ENCODE measurements at regions of chr20 and their contacts with region 1.

Region 1: GRCh38 chr20:324177-325044 is 941 bp upstream of the SOX12 start:
- DNase-seq: peak; percentile 93
- H3K4me3 ChIP-seq: peak overlapping the region; percentile 40 to 73 (median 69)
- H3K27ac ChIP-seq: peak overlapping the region; percentile 67
- H3K4me1 ChIP-seq: peaks cover 25% of the 10 kb centered on the region
- H3K27me3 ChIP-seq: no peaks in the 10 kb centered on the region
- CTCF ChIP-seq: peak; percentile 14 to 52
- POLR2A ChIP-seq: peak; percentile 35

Region 2: GRCh38 chr20:266596-267562 is 57.5 kb before region 1 on chr20:
- CTCF ChIA-PET with region 1: interaction called, 66 read pairs
- POLR2A ChIA-PET with region 1: no interaction called
- dilution Hi-C with region 1: no loop called
- intact Hi-C with region 1: loop called (anchors 1 kb)
- DNase-seq: peak; percentile 76
- H3K4me3 ChIP-seq: peak overlapping the region in 2 of 3 experiments; percentile 31 to 50
- H3K27ac ChIP-seq: no peak overlapping the region
- H3K4me1 ChIP-seq: peaks cover 3% of the 10 kb centered on the region
- H3K27me3 ChIP-seq: peaks cover 0 to 2% of the 10 kb centered on the region in 2 experiments
- CTCF ChIP-seq: peak; percentile 97 to 98
- POLR2A ChIP-seq: peak; percentile 53

Region 3: GRCh38 chr20:290084-290831 is 34.2 kb before region 1 on chr20 and contains the start of gene C20orf96:
- CTCF ChIA-PET with region 1: interaction called, 7 read pairs
- POLR2A ChIA-PET with region 1: interaction called, 3 read pairs
- dilution Hi-C with region 1: no loop called
- intact Hi-C with region 1: loop called (anchors 1 kb)
- DNase-seq: peak; percentile 94
- H3K4me3 ChIP-seq: peak within 1 kb of the TSS; percentile 82 to 98 (median 87)
- H3K27ac ChIP-seq: peak within 1 kb of the TSS; percentile 54
- H3K4me1 ChIP-seq: peaks cover 27% of the 10 kb centered on the region
- H3K27me3 ChIP-seq: no peaks in the 10 kb centered on the region
- CTCF ChIP-seq: peak; percentile 22 to 62
- POLR2A ChIP-seq: peak; percentile 70
- total RNA-seq, gene C20orf96: 17.0 and 20.0 TPM in 2 replicates

Region 4: GRCh38 chr20:297098-297924 is 27.1 kb before region 1 on chr20 and contains the start of gene ZCCHC3:
- CTCF ChIA-PET with region 1: interaction called, 42 read pairs
- POLR2A ChIA-PET with region 1: interaction called, 8 read pairs
- dilution Hi-C with region 1: no loop called
- intact Hi-C with region 1: loop called (anchors 1 kb)
- DNase-seq: peak; percentile 88
- H3K4me3 ChIP-seq: peak within 1 kb of the TSS; percentile 53 to 78 (median 63)
- H3K27ac ChIP-seq: peak within 1 kb of the TSS; percentile 83
- H3K4me1 ChIP-seq: peaks cover 33% of the 10 kb centered on the region
- H3K27me3 ChIP-seq: no peaks in the 10 kb centered on the region
- CTCF ChIP-seq: peak in 1 of 2 donors; percentile 17
- POLR2A ChIP-seq: peak; percentile 79
- total RNA-seq, gene ZCCHC3: 22.0 and 24.1 TPM in 2 replicates

Region 5: DNA sequence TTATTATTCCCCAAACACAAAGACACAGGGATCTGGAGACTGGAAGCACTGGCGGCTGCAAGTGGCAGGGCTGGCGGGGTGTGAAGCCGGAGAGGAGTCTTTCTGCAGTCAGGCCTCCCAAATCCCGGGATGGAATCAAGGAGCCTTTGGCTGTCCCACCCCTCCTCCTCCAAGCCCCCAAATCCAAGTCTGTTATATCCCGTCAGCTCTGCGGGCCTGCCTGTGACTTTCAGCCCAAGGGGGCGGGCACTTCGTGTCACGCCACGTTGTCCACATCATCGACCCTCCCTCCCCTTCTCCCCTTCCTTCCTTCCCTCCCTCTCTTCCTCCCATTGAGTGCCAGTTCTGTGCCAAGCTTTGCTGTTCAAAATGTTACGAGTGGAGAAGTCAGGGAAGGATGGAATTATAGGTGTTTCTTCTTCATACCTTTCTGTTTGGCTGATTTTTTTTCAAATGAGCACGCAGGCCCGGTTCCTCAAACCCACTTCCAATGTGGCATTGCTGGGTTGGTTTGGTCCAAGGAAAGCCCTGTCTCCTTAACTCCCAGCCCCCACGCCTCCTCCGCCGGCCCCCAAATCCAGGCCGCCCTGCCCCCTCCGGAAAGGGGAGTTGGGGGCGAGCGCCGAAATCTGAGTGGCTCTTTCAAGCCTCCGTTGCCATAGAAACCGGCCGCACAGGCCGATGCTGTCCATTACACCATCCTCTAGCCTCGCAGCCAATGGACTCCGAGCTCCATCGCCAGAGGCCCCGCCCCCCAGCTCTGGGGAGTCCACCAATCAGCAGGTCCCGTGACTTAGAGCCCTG is 14.4 kb before region 1 on chr20:
- CTCF ChIA-PET with region 1: interaction called, 18 read pairs
- POLR2A ChIA-PET with region 1: interaction called, 9 read pairs
- dilution Hi-C with region 1: no loop called
- intact Hi-C with region 1: loop called (anchors 1 kb)
- DNase-seq: peak; percentile 99
- H3K4me3 ChIP-seq: peak overlapping the region; percentile 34 to 54 (median 41)
- H3K27ac ChIP-seq: peak overlapping the region; percentile 96
- H3K4me1 ChIP-seq: peaks cover 31% of the 10 kb centered on the region
- H3K27me3 ChIP-seq: no peaks in the 10 kb centered on the region
- CTCF ChIP-seq: no peak
- POLR2A ChIP-seq: peak; percentile 86

Region 6: DNA sequence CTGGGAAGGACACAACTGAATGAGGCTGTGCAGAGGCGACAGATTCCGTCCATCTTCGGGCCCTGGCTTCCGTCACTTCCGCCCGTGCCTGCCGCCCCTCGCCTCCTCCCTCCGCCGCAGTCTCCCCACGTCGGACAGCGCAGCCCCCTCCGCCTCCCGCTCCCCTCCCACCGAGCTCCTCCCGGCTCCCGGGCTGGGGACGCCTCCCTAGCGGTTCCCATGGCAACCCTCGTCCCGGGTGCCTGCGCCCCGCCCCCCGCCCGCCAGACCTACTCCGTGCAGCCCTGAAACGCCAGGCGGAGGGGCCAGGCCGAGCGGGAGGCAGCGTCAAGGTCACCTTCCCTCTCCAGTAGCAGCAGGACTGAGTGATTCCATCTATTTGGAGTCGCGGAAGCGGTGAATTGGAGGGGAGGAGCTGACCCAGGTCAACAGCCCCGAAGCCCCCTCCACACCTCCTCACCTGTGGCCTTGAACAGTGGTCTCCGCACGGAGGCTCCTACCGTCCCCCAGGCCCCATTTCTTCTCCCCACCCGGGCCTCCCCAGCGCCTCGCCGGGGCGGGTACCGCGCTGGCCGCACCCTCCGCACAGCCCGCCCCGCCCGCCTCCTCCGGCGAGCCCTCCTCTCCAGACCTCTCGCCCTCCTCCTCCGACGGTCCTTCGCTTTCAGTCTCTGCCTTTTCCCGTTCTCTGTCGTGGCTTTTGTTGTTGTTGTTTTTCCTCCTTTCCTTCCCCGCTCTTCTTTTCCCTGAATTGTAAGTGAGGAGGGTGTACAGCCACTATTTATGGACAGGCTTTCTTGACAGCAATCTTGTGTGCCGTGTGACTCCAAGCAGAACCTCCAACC is 23.5 kb after region 1 on chr20:
- CTCF ChIA-PET with region 1: interaction called, 42 read pairs
- POLR2A ChIA-PET with region 1: interaction called, 4 read pairs
- dilution Hi-C with region 1: no loop called
- intact Hi-C with region 1: loop called (anchors 1 kb)
- DNase-seq: peak; percentile 89
- H3K4me3 ChIP-seq: peak overlapping the region; percentile 53 to 77 (median 54)
- H3K27ac ChIP-seq: peak overlapping the region; percentile 51
- H3K4me1 ChIP-seq: peaks cover 9% of the 10 kb centered on the region
- H3K27me3 ChIP-seq: no peaks in the 10 kb centered on the region
- CTCF ChIP-seq: no peak
- POLR2A ChIP-seq: peak; percentile 75